A549 (cell line): ENCODE measurements at regions of chr16 and their contacts with region 1.

Region 1: DNA sequence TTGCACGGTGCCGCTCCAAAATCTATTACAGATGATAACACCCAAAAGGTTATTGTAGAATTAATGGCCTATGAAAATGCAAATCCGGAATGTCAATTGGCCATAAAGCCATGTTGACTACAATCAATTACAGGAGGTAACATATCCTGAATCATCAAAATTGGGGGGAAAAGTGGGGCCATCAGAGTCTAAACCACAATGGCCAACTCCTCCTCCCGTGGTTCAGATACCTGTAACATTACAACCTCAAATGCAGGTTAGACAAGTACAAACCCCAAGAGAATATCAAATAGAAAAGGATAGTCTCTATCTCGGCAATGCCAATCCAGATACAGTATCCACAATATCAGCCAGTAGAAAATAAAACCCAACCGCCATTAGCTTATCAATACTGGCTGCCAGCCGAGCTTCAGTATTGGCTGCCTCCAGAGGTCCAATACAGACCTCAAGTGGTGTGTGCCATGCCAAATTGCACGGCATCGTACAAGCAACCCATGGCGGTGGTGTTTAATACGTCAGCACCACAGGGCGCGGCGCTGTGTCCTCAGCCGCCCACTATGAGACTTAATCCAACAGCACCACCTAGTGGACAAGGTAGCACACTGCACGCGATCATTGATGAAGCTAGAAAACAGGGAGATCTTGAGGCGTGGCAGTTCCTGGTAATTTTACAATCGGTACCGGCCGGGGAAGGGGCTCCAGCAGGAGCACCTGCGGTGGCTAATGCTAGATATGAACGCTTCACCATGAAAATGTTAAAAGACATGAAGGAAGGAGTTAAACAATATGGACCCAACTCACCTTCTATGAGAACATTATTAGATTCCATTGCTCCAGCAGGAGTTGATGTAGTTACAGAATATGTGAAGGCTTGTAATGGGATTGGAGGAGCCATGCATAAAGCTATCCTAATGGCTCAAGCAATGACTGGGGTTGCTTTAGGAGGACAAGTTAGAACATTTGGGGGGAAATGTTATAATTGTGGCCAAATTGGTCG is 15.2 kb downstream of the FLYWCH1 start:
- DNase-seq: peak; percentile 55 to 89
- ATAC-seq: peak; percentile 89 to 93
- H3K4me3 ChIP-seq: no peak overlapping the region
- H3K27ac ChIP-seq: 0 out of 6 replicates have a peak overlapping the region, but pooled peaks of 1 of the 2 experiments have one; percentile 2
- H3K4me1 ChIP-seq: peaks cover 3% of the 10 kb centered on the region; the same call in 1 of the 3 replicates
- CTCF ChIP-seq: peak; percentile 91
- EP300 ChIP-seq: no peak
- POLR2A ChIP-seq: no peak
- RAD21 ChIP-seq: peak; percentile 73 to 79

Region 2: DNA sequence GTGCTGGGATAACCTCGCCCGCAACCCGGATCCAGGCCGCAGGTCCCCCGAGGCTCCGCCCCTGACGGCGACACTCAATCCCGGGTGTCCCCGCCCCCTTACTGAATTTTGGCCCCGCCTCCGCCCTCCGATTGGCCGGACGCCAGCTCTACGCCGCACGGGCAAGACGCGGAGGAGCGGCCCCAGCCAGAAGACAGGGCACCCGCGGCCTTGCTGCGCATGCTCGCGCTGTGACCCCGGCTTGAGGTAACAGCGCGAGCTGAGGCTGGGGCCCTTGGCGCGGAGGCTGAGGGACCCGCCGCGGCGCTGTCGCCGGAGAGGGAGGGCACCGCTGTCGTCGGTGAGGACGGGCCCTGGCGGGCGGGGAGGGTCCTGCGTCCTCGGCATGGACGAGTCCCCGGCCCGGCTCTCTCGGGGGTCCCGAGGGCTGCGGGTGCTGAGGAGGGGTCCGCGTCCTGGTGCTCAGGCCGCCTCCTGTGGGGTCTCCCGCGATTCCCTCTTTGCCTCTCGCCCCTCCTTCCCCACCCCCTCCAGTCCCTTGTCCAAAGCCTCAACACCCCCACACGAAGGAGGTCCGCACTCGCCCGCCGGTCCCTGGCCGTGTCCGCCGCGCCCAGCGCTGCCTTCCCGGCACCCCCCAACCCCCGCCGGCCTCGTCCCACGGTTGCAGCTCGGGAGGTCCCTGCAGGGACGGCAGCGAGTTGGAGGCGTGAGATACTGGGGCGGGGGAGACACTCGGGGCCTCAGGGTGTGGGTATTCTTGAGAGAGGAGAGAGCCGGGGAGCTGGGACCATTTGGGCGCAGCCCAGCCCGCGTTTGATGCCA is 43.7 kb before region 1 on chr16 and contains the start of gene FLYWCH2:
- CTCF ChIA-PET with region 1: interaction called, 14 read pairs
- POLR2A ChIA-PET with region 1: interaction called, 3 read pairs
- DNase-seq: peak; percentile 83 to 97
- ATAC-seq: peak; percentile 80 to 86
- H3K4me3 ChIP-seq: peak within 1 kb of the TSS; percentile 94
- H3K27ac ChIP-seq: peak within 1 kb of the TSS; percentile 96 to 97
- H3K4me1 ChIP-seq: peaks cover 5% of the 10 kb centered on the region; the same call in 2 of the 3 replicates
- CTCF ChIP-seq: no peak
- EP300 ChIP-seq: no peak
- POLR2A ChIP-seq: peak; percentile 87
- RAD21 ChIP-seq: no peak
- polyA plus RNA-seq, gene FLYWCH2: 22.7 and 23.2 TPM in 2 replicates

Region 3: DNA sequence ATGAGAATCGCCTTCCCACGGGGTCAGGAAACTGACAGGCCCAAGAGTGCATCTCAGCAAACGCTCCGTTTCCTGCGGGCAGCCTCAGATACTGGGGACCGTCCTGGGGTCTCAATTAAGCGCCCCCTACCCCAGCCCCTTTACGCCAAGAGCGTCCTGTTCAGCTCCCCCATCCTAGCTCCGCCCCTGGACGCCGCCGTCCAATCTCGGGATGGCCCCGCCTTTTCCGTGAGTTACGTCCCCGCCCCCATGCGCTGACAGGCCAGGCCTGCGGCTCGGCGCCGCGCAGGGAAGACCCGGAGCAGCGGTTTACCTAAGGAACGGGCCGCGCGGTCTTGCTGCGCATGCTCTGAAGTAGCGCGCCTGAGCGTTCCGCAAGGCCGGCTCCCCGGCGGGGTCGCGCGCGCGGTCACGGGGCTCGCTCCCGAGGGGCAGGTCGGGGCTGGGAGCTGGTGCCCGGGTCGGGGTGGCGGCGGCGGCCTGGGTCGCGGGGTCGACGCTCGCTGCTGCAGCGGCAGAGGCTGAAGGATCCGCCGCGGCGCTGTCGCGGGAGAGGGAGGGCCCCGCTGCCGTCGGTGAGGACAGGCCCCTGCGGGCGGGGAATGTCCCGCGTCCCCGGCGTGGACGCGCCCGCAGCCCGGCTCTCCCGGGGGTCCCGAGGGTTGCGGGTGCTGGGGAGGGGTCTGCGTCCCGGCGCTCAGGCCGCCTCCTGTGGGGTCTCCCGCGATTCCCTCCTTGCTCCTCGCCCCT is 15.2 kb before region 1 on chr16 and contains the start of gene FLYWCH1:
- CTCF ChIA-PET with region 1: interaction called, 70 read pairs
- POLR2A ChIA-PET with region 1: no interaction called
- DNase-seq: peak; percentile 94 to 99
- ATAC-seq: peak; percentile 86 to 93
- H3K4me3 ChIP-seq: peak within 1 kb of the TSS; percentile 65
- H3K27ac ChIP-seq: peak within 1 kb of the TSS; percentile 86 to 97
- H3K4me1 ChIP-seq: peaks cover 25% of the 10 kb centered on the region
- CTCF ChIP-seq: no peak
- EP300 ChIP-seq: no peak
- POLR2A ChIP-seq: peak; percentile 73
- RAD21 ChIP-seq: no peak
- polyA plus RNA-seq, gene FLYWCH1: 9.3 and 10.6 TPM in 2 replicates

Region 4: DNA sequence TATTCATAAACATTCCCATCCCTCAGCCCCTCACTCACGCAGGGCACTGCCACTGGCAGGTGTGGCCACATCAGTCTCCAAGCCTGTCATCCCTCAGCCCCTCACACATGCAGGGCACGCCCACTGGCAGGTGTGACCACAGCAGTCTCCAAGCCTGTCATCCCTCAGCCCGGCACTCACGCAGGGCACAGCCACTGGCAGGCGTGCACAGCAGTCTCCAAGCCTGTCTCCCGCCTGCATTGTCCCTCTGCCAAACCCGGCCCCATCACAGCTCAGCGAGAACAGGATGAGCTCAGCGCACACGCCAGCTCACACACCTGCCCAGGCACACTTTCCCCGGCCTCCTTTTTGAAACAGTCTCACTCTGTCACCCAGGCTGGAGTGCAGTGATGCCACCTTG is 25.7 kb after region 1 on chr16:
- CTCF ChIA-PET with region 1: interaction called, 190 read pairs
- POLR2A ChIA-PET with region 1: no interaction called
- DNase-seq: no peak
- ATAC-seq: no peak
- H3K4me3 ChIP-seq: no peak overlapping the region
- H3K27ac ChIP-seq: no peak overlapping the region
- H3K4me1 ChIP-seq: peaks cover 11% of the 10 kb centered on the region
- CTCF ChIP-seq: no peak
- EP300 ChIP-seq: no peak
- POLR2A ChIP-seq: no peak
- RAD21 ChIP-seq: no peak

Region 5: DNA sequence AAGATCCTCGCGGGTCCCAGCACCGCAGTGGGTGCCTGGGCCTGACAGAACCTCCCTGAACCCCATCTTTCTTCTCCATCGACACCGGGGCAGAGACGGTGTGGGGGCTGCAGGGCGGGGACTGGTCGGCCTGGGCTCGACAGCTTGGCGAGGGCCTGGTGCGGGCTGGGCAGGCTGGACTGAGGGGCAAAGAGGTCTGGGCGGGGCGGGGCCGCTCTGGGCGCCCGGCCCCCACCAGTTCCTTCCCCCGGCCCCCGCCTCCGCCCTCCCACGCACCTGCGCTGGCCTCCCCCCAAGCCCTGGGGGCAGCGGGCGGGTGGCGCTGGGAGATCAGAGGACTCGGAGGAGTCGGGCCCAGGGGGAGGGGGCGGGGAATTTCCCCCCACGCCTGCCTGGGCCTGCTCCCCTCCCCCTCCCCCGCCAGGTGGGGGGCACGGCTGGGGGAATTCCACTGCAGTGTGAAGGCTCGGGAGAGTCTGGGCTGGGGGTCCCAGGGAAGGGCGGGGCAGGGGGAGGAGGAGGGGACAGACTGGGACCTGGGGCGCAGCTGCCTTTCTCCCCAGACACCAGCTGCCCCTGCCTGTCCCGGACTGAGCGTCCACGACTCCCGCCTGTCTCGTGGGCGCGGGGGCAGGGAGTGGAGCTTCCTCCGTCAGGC is 36.2 kb after region 1 on chr16:
- CTCF ChIA-PET with region 1: interaction called, 33 read pairs
- POLR2A ChIA-PET with region 1: no interaction called
- DNase-seq: no peak
- ATAC-seq: no peak; a peak in 1 of 6 replicates
- H3K4me3 ChIP-seq: peak overlapping the region; percentile 51
- H3K27ac ChIP-seq: peak overlapping the region; percentile 57 to 78
- H3K4me1 ChIP-seq: peaks cover 10% of the 10 kb centered on the region; the same call in 2 of the 3 replicates
- CTCF ChIP-seq: no peak
- EP300 ChIP-seq: no peak
- POLR2A ChIP-seq: no peak
- RAD21 ChIP-seq: no peak

Region 6: DNA sequence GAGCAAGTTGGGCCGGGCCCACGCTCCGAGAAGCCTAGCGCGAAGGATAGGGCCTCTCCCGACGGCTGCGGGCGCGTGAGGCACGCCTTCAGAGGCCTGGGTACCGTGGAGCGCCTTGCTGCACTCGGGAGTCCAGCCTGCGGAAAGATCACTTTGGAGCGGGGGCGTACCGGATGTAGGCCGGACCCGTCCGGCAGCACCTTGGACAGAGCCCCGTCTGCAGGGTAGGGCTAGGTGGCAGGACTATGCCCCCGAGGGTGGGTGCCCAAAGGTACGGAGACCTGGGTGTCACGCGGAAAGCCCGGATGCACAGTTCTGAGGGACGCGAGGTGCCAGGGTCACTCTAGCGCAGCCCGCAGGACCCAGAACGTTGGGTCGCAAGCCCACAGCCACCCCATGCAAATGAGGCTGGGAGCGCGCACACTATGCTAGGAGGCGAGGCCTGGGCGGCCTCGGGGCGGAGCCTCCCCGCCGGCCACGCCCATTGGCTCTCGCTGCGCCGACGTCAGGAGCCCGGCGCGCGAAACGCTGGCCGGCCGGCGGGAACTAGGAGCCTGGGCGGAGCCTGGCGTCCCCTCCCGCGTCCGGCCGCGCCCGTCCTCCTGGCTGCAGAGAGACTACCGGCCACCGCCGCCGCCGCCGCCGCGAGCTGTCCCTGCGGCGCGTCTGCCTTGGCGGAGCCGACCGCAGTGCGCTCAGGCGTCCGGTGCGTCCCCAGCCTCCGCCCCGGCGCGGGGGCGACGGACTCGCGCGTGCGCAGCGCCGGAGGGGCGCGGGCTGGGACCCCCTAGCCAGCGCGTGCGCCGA is 42.0 kb after region 1 on chr16 and contains the start of gene PAQR4:
- CTCF ChIA-PET with region 1: interaction called, 13 read pairs
- POLR2A ChIA-PET with region 1: no interaction called
- DNase-seq: peak; percentile 84 to 91
- ATAC-seq: peak; percentile 68 to 74
- H3K4me3 ChIP-seq: peak within 1 kb of the TSS; percentile 97
- H3K27ac ChIP-seq: peak within 1 kb of the TSS; percentile 84 to 91
- H3K4me1 ChIP-seq: peaks cover 17% of the 10 kb centered on the region
- CTCF ChIP-seq: no peak
- EP300 ChIP-seq: no peak
- POLR2A ChIP-seq: no peak; the same call in 1 of the 2 replicates
- RAD21 ChIP-seq: no peak
- polyA plus RNA-seq, gene PAQR4: 8.0 and 9.0 TPM in 2 replicates

Region 7: DNA sequence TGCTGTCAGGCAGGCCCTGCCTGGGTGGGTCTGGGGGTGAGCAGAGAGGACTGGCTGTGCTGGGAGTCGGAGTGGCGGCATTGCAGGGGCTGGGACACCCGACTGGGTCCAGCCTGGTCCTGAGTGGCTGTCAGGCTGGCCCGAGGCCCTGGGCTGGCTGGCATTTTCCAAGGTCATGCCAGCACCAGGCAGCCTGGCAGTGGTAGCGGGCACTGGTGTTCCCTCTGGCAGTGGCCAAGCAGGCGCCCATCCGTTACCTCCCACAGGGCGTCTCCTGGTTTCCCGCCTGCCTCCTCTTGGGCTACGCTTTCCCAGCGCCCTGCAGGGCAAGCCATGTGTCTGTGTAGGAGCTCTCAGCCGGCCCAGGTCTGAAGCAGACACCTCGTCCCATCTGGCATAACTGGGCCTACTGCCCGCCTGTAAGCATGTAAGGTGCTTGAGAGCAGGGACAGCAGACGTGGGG is 59.0 kb after region 1 on chr16:
- CTCF ChIA-PET with region 1: interaction called, 10 read pairs
- POLR2A ChIA-PET with region 1: no interaction called
- DNase-seq: no peak
- ATAC-seq: no peak; a peak in 1 of 6 replicates
- H3K4me3 ChIP-seq: no peak overlapping the region
- H3K27ac ChIP-seq: no peak overlapping the region
- H3K4me1 ChIP-seq: peaks cover 12% of the 10 kb centered on the region; the same call in 2 of the 3 replicates
- CTCF ChIP-seq: no peak
- EP300 ChIP-seq: no peak
- POLR2A ChIP-seq: no peak
- RAD21 ChIP-seq: no peak